Mammary epithelial cell (primary cell): ENCODE measurements at regions of chr22 and their contacts with region 1.

Region 1: DNA sequence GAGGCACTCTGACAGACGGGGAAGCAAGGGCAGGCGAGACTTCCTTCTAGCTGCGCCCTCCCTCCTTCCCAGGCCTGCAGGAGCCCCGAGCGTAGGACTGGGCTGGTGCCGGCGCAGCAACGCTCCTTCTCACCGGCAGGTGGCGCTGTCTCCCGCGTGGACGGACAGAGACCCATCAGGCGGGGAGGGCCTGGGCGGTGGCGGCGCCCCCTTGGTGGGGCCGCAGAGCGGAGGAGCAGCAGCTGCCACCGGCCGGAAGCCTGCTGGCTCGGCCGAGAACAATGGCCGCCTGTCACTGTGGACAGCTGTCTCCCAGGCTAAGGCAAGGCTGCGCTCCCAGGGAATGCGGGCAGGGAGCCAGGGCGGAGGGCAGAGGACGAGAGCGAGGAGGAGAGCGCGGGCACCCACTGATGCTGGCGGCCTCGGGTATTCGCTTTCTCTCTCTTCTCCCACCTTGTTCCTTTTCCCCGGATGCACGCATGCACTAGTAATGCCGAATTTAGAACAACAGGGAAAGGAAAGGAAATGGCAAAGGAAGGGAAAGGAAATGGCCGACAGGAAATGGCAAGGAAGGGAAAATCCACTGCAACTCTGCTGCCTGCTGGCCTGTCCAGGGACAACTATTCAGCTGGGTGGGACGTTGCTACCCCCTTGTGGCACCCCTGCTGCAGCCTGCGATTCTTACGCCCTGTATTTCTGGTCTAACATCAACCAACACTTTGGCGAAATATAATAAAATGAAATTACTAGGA is 14.4 kb downstream of the PPM1F start:
- DNase-seq: peak; percentile 64
- H3K4me3 ChIP-seq: peak overlapping the region; percentile 12 to 53 (median 44)
- H3K27ac ChIP-seq: peak overlapping the region; percentile 72
- H3K4me1 ChIP-seq: peaks cover 46% of the 10 kb centered on the region
- H3K27me3 ChIP-seq: no peaks in the 10 kb centered on the region
- CTCF ChIP-seq: peak; percentile 94 to 99

Region 2: GRCh38 chr22:21712894-21713712 is 225.1 kb before region 1 on chr22:
- CTCF ChIA-PET with region 1: no interaction called
- dilution Hi-C with region 1: loop called (anchors 5 kb)
- in situ Hi-C with region 1: loop called in 1 of 2 experiments (anchors 5 kb)
- intact Hi-C with region 1: loop called (anchors 1 kb)
- DNase-seq: peak; percentile 59
- H3K4me3 ChIP-seq: no peak overlapping the region
- H3K27ac ChIP-seq: no peak overlapping the region
- H3K4me1 ChIP-seq: peaks cover 3% of the 10 kb centered on the region
- H3K27me3 ChIP-seq: no peaks in the 10 kb centered on the region
- CTCF ChIP-seq: peak; percentile 74 to 77

Region 3: GRCh38 chr22:21802056-21802455 is 136.2 kb before region 1 on chr22:
- CTCF ChIA-PET with region 1: no interaction called
- dilution Hi-C with region 1: loop called (anchors 5 kb)
- in situ Hi-C with region 1: no loop called
- intact Hi-C with region 1: no loop called
- DNase-seq: peak; percentile 5
- H3K4me3 ChIP-seq: no peak overlapping the region
- H3K27ac ChIP-seq: no peak overlapping the region
- H3K4me1 ChIP-seq: no peaks in the 10 kb centered on the region
- H3K27me3 ChIP-seq: no peaks in the 10 kb centered on the region
- CTCF ChIP-seq: no peak

Region 4: GRCh38 chr22:21857481-21857914 is 80.7 kb before region 1 on chr22:
- CTCF ChIA-PET with region 1: no interaction called
- dilution Hi-C with region 1: no loop called
- in situ Hi-C with region 1: no loop called
- intact Hi-C with region 1: no loop called
- DNase-seq: no peak
- H3K4me3 ChIP-seq: no peak overlapping the region
- H3K27ac ChIP-seq: no peak overlapping the region
- H3K4me1 ChIP-seq: peaks cover 17% of the 10 kb centered on the region
- H3K27me3 ChIP-seq: no peaks in the 10 kb centered on the region
- CTCF ChIP-seq: no peak

Region 5: DNA sequence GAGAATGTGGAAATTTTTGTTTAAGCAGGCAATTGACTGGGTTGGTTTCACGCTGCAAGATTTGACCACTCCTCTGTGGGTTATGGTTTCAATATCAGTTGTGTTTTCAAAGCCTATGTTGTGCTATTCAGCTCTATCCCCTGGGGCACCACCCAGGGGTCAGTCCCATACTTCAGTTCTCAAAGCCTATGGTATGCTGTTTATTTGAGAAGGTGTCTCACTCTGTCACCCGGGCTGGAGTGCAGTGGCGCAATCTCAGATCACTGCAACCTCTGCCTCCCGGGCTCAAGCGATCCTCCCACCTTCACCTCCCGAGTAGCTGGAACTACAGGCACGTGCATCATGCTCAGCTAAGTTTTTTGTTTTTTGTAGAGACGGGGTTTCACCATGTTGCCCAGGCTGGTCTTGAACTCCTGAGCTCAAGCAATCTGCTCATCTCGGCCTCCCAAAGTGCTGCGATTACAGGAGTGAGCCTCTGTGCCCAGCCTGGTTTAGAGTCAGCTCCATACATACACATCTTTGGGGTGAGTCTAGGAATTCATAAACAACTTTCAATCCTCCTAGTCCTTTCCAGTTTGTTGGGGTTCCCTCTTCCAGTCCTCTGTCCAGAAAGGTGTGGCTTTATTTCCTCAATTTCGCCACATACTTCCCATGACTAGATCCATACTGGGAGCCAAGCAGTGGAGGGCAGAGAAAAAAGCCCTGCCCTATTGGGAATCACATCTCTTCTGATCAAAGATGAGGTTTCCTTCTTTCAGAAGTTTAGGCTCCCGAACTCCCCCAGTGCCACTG is 35.8 kb before region 1 on chr22:
- CTCF ChIA-PET with region 1: no interaction called
- dilution Hi-C with region 1: no loop called
- in situ Hi-C with region 1: no loop called
- intact Hi-C with region 1: no loop called
- DNase-seq: no peak
- H3K4me3 ChIP-seq: no peak overlapping the region
- H3K27ac ChIP-seq: no peak overlapping the region
- H3K4me1 ChIP-seq: no peaks in the 10 kb centered on the region
- H3K27me3 ChIP-seq: no peaks in the 10 kb centered on the region
- CTCF ChIP-seq: no peak

Region 6: GRCh38 chr22:21972293-21972779 is 34.1 kb after region 1 on chr22:
- CTCF ChIA-PET with region 1: no interaction called
- dilution Hi-C with region 1: no loop called
- in situ Hi-C with region 1: no loop called
- intact Hi-C with region 1: no loop called
- DNase-seq: no peak
- H3K4me3 ChIP-seq: no peak overlapping the region
- H3K27ac ChIP-seq: no peak overlapping the region
- H3K4me1 ChIP-seq: peaks cover 5% of the 10 kb centered on the region
- H3K27me3 ChIP-seq: no peaks in the 10 kb centered on the region
- CTCF ChIP-seq: peak; percentile 73 to 85

Region 7: DNA sequence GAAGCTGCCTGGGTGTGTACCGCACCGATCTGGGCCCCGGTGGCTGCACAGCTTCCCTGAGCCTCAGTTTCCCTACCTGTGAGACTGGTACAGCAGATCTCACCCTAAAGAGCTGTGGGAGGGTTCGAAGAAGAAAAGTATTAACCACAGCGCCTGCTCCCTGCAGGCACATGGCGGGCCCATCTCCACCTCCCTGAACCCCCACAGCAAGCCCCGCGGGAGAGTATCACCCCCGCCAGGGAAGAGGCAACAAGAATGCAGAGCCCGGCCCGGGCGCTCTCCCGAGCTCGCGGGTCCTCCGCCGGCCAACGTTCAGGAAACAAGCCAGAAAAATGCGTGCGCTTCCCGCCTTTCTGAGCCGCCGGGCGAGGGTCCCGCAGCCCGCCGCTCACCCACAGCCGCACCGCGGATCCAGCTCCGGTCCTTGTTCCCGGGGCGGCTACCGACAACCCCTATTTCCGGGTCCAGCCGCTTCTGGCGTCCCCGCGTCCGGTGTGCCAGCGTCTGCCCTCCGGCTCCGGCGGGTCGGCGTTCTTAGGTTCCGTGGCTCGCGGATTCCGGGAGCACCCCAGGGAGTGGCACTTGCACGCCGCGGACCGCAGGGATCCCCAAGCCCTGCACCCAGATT is 44.2 kb after region 1 on chr22 and contains the start of gene TOP3B:
- CTCF ChIA-PET with region 1: no interaction called
- dilution Hi-C with region 1: no loop called
- in situ Hi-C with region 1: no loop called
- intact Hi-C with region 1: loop called (anchors 1 kb)
- DNase-seq: peak; percentile 75
- H3K4me3 ChIP-seq: peak within 1 kb of the TSS; percentile 89 to 99 (median 95)
- H3K27ac ChIP-seq: peak within 1 kb of the TSS; percentile 75
- H3K4me1 ChIP-seq: peaks cover 9% of the 10 kb centered on the region
- H3K27me3 ChIP-seq: no peaks in the 10 kb centered on the region
- CTCF ChIP-seq: no peak
- total RNA-seq, gene TOP3B: 36.4 to 36.7 TPM